Gastrocnemius medialis (tissue), 4 donors: ENCODE measurements at regions of chr19 and their contacts with region 1.

Region 1: DNA sequence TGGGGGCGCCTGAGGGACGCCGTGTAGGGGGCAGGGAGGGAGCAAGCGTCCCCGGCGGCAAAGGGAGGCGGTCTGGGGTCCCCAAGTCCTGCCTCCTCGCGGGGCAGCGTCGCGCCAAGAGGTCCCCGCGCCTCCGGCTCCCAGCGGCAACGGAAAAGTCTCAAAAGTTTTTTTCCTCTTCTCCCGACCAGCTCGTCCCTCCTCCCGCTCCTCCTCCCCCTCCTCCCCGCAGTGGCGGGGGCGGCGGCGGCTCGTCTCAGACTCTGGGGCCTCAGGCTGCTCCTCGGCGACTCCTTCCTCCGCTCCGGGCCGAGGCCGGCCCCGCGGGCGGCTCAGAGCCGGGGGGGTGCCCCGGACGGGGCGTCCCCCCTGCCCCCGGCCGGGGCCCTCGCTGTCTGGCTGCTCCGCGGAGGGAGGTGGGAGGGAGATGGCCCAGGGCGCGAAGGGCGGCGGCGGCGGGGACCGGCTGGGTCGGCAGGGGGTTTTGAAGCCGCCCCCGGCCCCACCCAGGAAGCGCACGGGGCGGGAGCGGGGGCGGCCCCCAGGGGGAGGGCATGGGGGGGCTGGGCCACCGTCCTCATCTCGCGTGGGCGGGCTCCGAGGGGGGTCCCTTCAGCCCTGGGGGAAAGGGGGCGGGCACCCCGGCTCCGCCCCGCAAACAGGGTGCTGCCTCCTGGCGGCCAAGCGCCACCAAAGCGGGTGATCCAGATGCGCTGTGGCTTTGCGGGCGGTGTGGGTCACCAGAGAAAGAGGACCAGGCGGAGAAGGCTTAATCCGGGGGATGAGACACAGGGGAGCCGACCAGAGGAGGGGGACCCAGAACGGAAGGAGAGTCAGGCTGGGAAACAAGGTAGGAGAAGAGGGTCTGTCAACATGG is at the start of gene TGFB1:
- DNase-seq: peak; percentile 63
- ATAC-seq: peak; percentile 50 to 56
- H3K4me3 ChIP-seq: peak within 1 kb of the TSS; percentile 67 to 76 (median 73)
- H3K27ac ChIP-seq: peak within 1 kb of the TSS; percentile 75 to 80 (median 80)
- H3K4me1 ChIP-seq: peaks cover 0 to 32% of the 10 kb centered on the region in 2 donors
- H3K27me3 ChIP-seq: peaks cover 27 to 48% (median 45%) of the 10 kb centered on the region in 3 donors
- CTCF ChIP-seq: peak; percentile 37 to 80 (median 77)
- POLR2A ChIP-seq: peak; percentile 40 to 58
- total RNA-seq, gene TGFB1: 1.9 to 5.2 (median 4.9) TPM

Region 2: GRCh38 chr19:41206926-41207750 is 146.6 kb before region 1 on chr19:
- in situ Hi-C with region 1: no loop called
- intact Hi-C with region 1: loop called (anchors 5 kb)
- DNase-seq: peak; percentile 67 to 88
- ATAC-seq: peak; percentile 60 to 79
- H3K4me3 ChIP-seq: no peak overlapping the region
- H3K27ac ChIP-seq: peak overlapping the region; percentile 58 to 65 (median 60)
- H3K4me1 ChIP-seq: no peaks in the 10 kb centered on the region
- H3K27me3 ChIP-seq: no peaks in the 10 kb centered on the region
- CTCF ChIP-seq: no peak
- POLR2A ChIP-seq: no peak

Region 3: DNA sequence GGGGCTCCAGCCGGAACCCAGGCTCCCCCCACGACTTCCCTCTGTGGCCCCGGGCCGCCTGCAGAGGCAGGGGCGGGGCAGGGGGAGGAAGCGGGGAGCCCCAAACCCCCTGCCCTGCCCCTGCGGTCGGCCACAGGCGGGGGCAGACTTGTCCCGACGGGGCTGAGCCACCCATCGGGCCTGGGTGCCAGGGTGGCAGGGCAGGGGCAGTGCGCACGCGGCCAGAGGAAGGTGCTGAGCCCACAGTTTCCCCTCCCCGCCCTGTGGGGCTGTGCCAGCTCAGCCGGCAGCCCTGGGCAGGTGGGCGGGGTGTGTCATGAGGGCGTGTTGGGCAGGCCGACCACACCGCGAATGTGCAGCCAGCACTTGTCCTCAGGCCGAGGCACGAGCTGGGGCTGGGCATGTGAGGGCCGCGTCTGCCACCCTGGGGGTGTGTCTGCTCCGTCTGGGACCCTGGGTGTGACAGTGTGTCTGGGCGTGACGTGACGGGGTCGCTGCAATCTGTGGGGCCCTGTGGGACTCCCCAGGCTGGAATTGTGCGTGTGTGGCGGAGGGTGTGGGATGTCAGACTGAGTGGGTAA is 26.0 kb before region 1 on chr19:
- in situ Hi-C with region 1: no loop called
- intact Hi-C with region 1: loop called (anchors 2 kb)
- DNase-seq: peak; percentile 38 to 76
- ATAC-seq: peak; percentile 12 to 38
- H3K4me3 ChIP-seq: peak overlapping the region; percentile 2 to 49 (median 23)
- H3K27ac ChIP-seq: peak overlapping the region; percentile 37 to 77 (median 68)
- H3K4me1 ChIP-seq: peaks cover 25 to 48% of the 10 kb centered on the region in 2 donors
- H3K27me3 ChIP-seq: no peaks in the 10 kb centered on the region
- CTCF ChIP-seq: no peak
- POLR2A ChIP-seq: no peak